ENCODE measurements at regions of chr14 and their contacts with region 1.

Region 1: GRCh38 chr14:102096214-102097114 is 9.6 kb upstream of the HSP90AA1 start:
- DNase-seq: peak; percentile 84 to 92 (median 91)
- H3K4me3 ChIP-seq: no peak overlapping the region
- H3K27ac ChIP-seq: no peak overlapping the region
- H3K4me1 ChIP-seq: no peaks in the 10 kb centered on the region
- H3K27me3 ChIP-seq: no peaks in the 10 kb centered on the region
- CTCF ChIP-seq: peak; percentile 54 to 84 (median 77)
- EP300 ChIP-seq: no peak
- POLR2A ChIP-seq: no peak

Region 2: GRCh38 chr14:101707068-101707842 is 389.2 kb before region 1 on chr14:
- intact Hi-C with region 1: loop called (anchors 5 to 10 kb)
- DNase-seq: peak; percentile 34 to 68 (median 46)
- H3K4me3 ChIP-seq: no peak overlapping the region
- H3K27ac ChIP-seq: no peak overlapping the region
- H3K4me1 ChIP-seq: no peaks in the 10 kb centered on the region
- H3K27me3 ChIP-seq: no peaks in the 10 kb centered on the region
- CTCF ChIP-seq: peak; percentile 69 to 90 (median 87)
- EP300 ChIP-seq: no peak
- POLR2A ChIP-seq: no peak

Region 3: GRCh38 chr14:101716956-101717662 is 379.4 kb before region 1 on chr14:
- intact Hi-C with region 1: loop called in 1 of 4 experiments (anchors 10 kb)
- DNase-seq: no peak
- H3K4me3 ChIP-seq: no peak overlapping the region
- H3K27ac ChIP-seq: no peak overlapping the region
- H3K4me1 ChIP-seq: no peaks in the 10 kb centered on the region
- H3K27me3 ChIP-seq: no peaks in the 10 kb centered on the region
- CTCF ChIP-seq: no peak
- EP300 ChIP-seq: no peak
- POLR2A ChIP-seq: no peak

Region 4: DNA sequence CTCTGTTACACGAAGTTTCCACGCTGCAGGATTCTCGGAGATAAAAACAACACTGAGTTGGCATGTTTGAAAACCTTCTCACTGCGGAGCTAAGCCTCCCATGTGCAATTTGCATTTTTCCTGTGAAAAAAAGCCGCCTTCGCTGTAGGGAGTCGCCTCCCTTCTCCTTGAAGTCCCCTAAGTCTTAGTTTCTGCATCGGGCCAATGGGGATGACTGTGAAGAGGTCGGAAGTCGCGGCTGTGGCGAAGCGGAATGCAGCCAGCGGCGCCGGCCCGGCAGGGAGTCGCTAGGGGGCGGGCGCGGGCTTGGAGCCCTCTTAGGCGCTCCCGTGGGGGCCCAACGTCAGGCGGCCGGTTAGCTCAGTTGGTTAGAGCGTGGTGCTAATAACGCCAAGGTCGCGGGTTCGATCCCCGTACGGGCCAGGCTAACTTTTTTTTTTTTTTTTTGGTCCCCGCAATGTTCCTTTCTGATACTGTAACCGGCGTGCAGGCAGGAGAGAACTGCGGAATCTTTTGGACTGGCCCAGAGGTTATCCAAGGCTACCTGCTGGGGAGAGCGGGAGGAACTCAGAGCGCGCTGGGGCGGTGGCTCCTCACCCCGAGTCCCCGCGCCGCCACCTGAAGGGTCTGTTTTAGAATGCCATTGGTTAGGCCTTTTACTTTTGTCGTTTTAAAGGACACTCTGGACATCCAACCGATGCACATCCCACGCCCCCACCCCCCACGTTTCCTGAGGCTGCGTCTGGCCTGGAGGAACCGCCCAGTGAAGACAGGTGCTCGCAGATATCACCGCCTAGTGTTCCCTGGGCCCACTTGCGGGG is 220.5 kb after region 1 on chr14:
- intact Hi-C with region 1: loop called in 1 of 4 experiments (anchors 10 kb)
- DNase-seq: peak; percentile 83 to 93 (median 90)
- H3K4me3 ChIP-seq: peak overlapping the region; percentile 43
- H3K27ac ChIP-seq: peak overlapping the region; percentile 5 to 49
- H3K4me1 ChIP-seq: peaks cover 13% of the 10 kb centered on the region
- H3K27me3 ChIP-seq: no peaks in the 10 kb centered on the region
- CTCF ChIP-seq: peak; percentile 93 to 94 (median 94)
- EP300 ChIP-seq: no peak
- POLR2A ChIP-seq: no peak

Region 5: DNA sequence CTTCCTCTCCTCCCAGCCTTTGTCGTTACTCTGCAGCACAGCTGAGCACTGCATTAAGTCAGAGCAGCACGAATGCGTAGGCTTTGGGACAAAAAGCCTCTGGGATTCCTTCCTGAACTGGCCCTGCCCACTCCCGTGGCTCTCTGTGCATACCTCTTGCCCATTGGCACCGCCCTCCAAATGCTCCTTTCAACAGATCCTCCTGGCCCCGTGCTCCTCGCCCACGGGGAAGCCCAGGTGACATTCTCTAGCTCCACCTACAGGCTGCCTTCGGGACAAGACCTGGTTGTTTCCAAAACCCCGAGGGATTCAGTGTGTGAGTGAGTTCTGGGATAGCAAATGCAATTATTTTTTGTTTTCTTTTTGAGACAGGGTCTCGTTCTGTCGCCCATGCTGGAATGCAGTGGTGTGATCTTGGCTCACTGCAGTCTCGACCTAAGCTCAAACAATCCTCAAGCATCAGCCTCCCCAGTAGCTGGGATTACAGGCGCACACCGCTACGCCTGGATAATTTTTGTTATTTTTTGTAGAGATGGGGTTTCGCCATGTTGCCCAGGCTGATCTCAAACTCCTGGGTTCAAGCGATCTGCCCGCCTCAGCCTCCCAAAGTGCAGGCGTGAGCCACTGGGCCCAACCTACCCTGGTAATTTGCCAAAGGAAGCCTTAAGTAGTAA is 1813.9 kb after region 1 on chr14:
- intact Hi-C with region 1: no loop called
- DNase-seq: peak; percentile 75 to 82 (median 81)
- H3K4me3 ChIP-seq: no peak overlapping the region
- H3K27ac ChIP-seq: no peak overlapping the region
- H3K4me1 ChIP-seq: no peaks in the 10 kb centered on the region
- H3K27me3 ChIP-seq: no peaks in the 10 kb centered on the region
- CTCF ChIP-seq: peak; percentile 63 to 85 (median 74)
- EP300 ChIP-seq: no peak
- POLR2A ChIP-seq: no peak